A673 (cell line): ENCODE measurements at regions of chr11 and their contacts with region 1.

Region 1: DNA sequence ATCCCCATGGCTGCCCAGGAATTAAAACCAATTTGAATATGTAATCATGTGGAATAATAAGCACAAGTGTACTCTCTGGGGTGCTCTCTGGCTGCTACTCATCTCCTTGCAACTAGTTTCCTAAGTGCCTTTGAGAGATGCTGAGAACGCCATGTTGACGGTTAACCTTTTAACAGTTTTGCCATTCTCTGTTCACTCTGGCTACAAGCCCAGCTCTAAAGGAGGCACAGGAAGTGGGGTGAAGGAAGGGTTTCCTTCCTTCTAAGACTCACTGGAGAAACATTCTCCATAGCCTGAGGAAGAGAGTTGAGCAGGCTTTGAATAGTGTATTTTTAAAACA is 122.0 kb upstream of the ZC3H12C start:
- DNase-seq: peak; percentile 99
- H3K4me3 ChIP-seq: peak overlapping the region; percentile 23
- H3K27ac ChIP-seq: peak overlapping the region; percentile 88
- H3K4me1 ChIP-seq: peaks cover 48% of the 10 kb centered on the region
- H3K27me3 ChIP-seq: no peaks in the 10 kb centered on the region
- CTCF ChIP-seq: no peak

Region 2: DNA sequence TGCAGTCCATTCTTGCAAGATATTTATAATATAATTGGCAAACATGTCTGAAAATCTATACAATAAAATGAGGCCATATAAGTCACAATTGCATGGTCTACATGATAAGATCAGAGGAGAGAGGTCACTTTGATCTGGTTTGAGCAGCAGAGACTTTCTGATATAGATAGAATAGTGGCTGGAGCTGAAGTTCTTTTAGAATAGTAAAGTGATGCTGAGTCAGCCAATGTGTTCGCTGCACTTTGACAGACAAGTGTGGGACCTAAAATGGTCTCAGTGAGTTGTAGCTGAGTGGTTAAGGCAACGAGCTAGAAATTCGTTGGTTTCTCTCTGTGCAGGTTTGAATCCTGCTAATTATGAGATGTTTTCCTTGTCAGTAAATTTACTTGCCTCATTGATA is 806.1 kb before region 1 on chr11:
- CTCF ChIA-PET with region 1: no interaction called
- POLR2A ChIA-PET with region 1: no interaction called
- intact Hi-C with region 1: no loop called
- DNase-seq: no peak
- H3K4me3 ChIP-seq: no peak overlapping the region
- H3K27ac ChIP-seq: no peak overlapping the region
- H3K4me1 ChIP-seq: no peaks in the 10 kb centered on the region
- H3K27me3 ChIP-seq: peaks cover 12% of the 10 kb centered on the region
- CTCF ChIP-seq: no peak

Region 3: GRCh38 chr11:109911488-109911887 is 59.7 kb before region 1 on chr11:
- CTCF ChIA-PET with region 1: no interaction called
- POLR2A ChIA-PET with region 1: no interaction called
- intact Hi-C with region 1: no loop called
- DNase-seq: no peak
- H3K4me3 ChIP-seq: no peak overlapping the region
- H3K27ac ChIP-seq: no peak overlapping the region
- H3K4me1 ChIP-seq: no peaks in the 10 kb centered on the region
- H3K27me3 ChIP-seq: no peaks in the 10 kb centered on the region
- CTCF ChIP-seq: no peak

Region 4: DNA sequence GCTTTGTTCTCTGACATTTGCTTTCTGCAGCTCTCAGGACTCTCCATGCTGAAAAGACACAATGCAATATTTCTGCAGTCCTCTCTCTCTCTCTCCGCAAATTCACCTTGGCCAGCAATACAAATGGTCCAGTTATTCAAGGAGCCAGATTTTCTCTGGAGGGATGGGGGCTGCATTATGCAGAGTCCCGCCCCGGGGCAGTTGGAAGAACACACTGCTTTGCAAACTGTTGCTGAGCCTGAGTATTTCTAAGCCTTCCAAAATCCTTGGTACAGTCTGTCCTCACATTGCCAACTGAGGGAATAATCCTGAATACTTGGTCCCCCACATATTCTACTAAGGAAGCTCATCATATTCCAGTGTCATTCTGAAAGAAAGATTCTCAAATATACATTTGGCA is 27.8 kb after region 1 on chr11:
- CTCF ChIA-PET with region 1: no interaction called
- POLR2A ChIA-PET with region 1: no interaction called
- intact Hi-C with region 1: loop called (anchors 2 kb)
- DNase-seq: peak; percentile 29
- H3K4me3 ChIP-seq: no peak overlapping the region
- H3K27ac ChIP-seq: peak overlapping the region; percentile 83
- H3K4me1 ChIP-seq: peaks cover 46% of the 10 kb centered on the region
- H3K27me3 ChIP-seq: no peaks in the 10 kb centered on the region
- CTCF ChIP-seq: no peak

Region 5: GRCh38 chr11:110023711-110024110 is 52.6 kb after region 1 on chr11:
- CTCF ChIA-PET with region 1: no interaction called
- POLR2A ChIA-PET with region 1: no interaction called
- intact Hi-C with region 1: loop called (anchors 1 kb)
- DNase-seq: peak; percentile 89
- H3K4me3 ChIP-seq: no peak overlapping the region
- H3K27ac ChIP-seq: peak overlapping the region; percentile 72
- H3K4me1 ChIP-seq: peaks cover 31% of the 10 kb centered on the region
- H3K27me3 ChIP-seq: no peaks in the 10 kb centered on the region
- CTCF ChIP-seq: no peak

Region 6: DNA sequence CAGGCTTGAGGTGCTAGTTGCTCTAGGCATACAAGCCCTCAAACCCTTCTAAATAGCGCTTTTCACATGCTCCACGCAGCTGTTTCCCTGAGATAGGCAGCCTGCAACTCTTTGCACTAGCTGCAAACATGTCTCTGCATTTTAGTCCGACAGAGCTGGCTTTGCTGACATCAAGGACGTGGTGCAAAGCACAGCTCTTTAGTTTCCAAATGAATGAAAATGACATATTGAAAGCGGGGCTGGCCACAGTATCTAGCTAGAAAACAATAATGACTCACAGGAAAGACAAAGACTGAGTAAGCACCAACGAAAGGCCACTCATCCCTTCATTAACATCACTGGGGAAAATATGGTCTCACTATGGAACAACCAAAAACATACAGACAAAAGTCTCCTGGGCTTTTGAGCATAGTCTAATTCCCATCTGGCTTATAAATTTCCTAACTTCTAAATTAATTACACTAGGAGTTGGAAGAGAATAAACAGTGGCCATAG is 106.7 kb after region 1 on chr11:
- CTCF ChIA-PET with region 1: no interaction called
- POLR2A ChIA-PET with region 1: no interaction called
- intact Hi-C with region 1: loop called (anchors 2 kb)
- DNase-seq: peak; percentile 56
- H3K4me3 ChIP-seq: no peak overlapping the region
- H3K27ac ChIP-seq: peak overlapping the region; percentile 15
- H3K4me1 ChIP-seq: peaks cover 40% of the 10 kb centered on the region
- H3K27me3 ChIP-seq: no peaks in the 10 kb centered on the region
- CTCF ChIP-seq: no peak

Region 7: DNA sequence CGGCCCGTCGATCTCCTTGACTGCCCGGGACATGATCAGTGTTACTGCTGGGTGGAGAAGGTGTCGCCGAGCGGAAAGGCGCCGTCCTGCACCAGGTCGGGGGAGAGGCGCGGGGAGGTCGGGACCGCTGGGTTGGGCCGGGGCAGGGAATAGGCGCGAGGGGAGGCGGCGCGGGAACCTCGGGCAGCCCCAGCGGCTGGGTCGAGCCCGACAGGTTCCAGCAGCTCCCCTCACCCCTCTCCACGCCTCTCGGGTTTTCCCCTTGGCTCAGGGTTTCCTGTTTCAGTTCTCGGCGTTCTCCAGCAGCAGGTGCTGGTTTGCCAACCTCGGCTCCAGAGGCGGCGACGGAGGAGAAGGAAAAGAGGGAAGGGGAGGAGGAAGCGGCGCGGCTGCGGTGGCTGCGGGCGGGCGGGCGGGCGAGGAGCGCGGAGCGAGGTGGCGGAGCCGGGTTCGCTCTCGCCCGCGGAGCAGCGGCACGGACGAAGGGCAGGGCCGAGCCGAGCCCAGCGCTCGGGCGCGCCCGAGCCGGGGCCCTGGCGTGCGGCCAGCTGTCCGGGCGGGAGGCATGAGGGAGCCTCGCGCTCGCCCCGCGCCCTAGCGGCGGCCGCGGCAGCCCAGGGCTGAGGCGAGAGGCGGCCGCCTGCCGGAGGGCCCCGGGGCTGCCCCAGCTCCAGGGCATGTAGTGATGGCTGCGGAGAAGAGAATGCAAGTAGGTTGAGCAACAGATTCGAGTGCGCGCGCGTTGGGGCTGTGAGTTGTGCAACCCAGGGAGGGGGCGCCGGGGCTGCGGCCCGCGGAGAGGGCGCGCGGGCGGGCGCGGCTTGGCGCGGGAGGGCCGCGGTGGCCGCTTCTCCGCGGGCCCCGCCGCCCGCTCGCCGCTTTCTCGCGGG is 121.6 kb after region 1 on chr11 and contains the start of gene ZC3H12C:
- CTCF ChIA-PET with region 1: no interaction called
- POLR2A ChIA-PET with region 1: interaction called, 7 read pairs
- intact Hi-C with region 1: loop called (anchors 1 kb)
- DNase-seq: peak; percentile 97
- H3K4me3 ChIP-seq: peak within 1 kb of the TSS; percentile 77
- H3K27ac ChIP-seq: peak within 1 kb of the TSS; percentile 95
- H3K4me1 ChIP-seq: peaks cover 38% of the 10 kb centered on the region
- H3K27me3 ChIP-seq: no peaks in the 10 kb centered on the region
- CTCF ChIP-seq: peak; percentile 53; the same call in 1 of the 2 replicates
- total RNA-seq, gene ZC3H12C: 18.7 and 21.7 TPM in 2 replicates

Region 8: DNA sequence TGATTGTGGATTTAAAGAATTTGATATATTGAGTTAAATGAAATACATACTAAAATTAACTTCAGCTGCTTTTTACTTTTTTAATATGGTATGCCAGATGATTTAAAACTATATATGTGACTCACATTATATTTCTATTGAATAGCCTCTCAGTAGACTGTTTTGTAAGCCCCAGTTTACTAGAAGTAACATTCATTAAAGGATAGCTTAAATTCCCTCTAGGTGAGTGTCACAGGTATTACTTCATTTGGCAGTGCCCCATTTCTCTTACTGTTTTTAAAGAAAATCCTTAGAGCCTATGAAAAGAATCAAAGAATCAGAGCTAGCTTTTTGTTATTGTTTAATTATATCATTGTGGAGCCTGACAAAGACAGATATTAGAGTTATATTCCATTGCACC is 170.7 kb after region 1 on chr11:
- CTCF ChIA-PET with region 1: no interaction called
- POLR2A ChIA-PET with region 1: interaction called, 12 read pairs
- intact Hi-C with region 1: no loop called
- DNase-seq: no peak
- H3K4me3 ChIP-seq: no peak overlapping the region
- H3K27ac ChIP-seq: no peak overlapping the region
- H3K4me1 ChIP-seq: peaks cover 4% of the 10 kb centered on the region
- H3K27me3 ChIP-seq: no peaks in the 10 kb centered on the region
- CTCF ChIP-seq: no peak